ENCODE measurements at regions of chr10 and their contacts with region 1.

Region 1: GRCh38 chr10:112394475-112394875 is 20.6 kb downstream of the ACSL5 start:
- DNase-seq: peak; percentile 99
- ATAC-seq: peak; percentile 97
- H3K4me3 ChIP-seq: peak overlapping the region in 1 of 3 experiments; percentile 34; a peak in 1 of 6 replicates
- H3K27ac ChIP-seq: peak overlapping the region; percentile 83
- H3K4me1 ChIP-seq: peaks cover 71% of the 10 kb centered on the region
- H3K27me3 ChIP-seq: no peaks in the 10 kb centered on the region
- CTCF ChIP-seq: no peak
- EP300 ChIP-seq: peak; percentile 15 to 96; a peak in 2 of 4 replicates
- POLR2A ChIP-seq: 0 out of 4 replicates have a peak, but pooled peaks of 1 of the 2 experiments have one; percentile 39
- RAD21 ChIP-seq: peak; percentile 41; the same call in 1 of the 2 replicates

Region 2: DNA sequence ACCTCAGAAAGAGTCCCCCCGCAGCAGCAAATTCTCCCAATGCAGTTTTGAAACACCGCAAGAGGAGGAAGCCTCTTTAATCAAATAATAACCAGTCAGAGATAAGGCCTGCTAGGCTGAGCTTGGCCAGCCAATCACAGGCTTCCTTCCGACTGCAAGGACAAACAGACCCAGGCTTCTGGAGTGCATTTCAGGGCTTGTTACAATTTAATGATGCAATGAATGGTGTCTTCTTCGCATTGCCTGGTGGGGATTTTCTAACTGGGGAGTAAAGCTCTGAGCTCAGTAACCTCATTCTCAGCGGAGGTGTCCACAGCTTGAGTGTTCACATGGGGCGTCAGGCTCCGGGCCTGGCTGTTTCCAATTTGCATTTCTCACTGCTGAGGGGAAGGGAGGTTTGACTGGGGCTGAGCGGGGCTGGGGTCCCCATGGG is 179.1 kb before region 1 on chr10:
- CTCF ChIA-PET with region 1: no interaction called
- POLR2A ChIA-PET with region 1: no interaction called
- in situ Hi-C with region 1: no loop called
- intact Hi-C with region 1: no loop called
- DNase-seq: peak; percentile 72
- ATAC-seq: peak; percentile 83
- H3K4me3 ChIP-seq: no peak overlapping the region
- H3K27ac ChIP-seq: peak overlapping the region; percentile 51
- H3K4me1 ChIP-seq: peaks cover 88% of the 10 kb centered on the region
- H3K27me3 ChIP-seq: no peaks in the 10 kb centered on the region
- CTCF ChIP-seq: no peak
- EP300 ChIP-seq: no peak
- POLR2A ChIP-seq: no peak
- RAD21 ChIP-seq: no peak

Region 3: GRCh38 chr10:112278871-112279270 is 115.6 kb before region 1 on chr10:
- CTCF ChIA-PET with region 1: no interaction called
- POLR2A ChIA-PET with region 1: no interaction called
- in situ Hi-C with region 1: no loop called
- intact Hi-C with region 1: no loop called
- DNase-seq: no peak
- ATAC-seq: no peak
- H3K4me3 ChIP-seq: no peak overlapping the region
- H3K27ac ChIP-seq: peak overlapping the region; percentile 60
- H3K4me1 ChIP-seq: peaks cover 77% of the 10 kb centered on the region
- H3K27me3 ChIP-seq: no peaks in the 10 kb centered on the region
- CTCF ChIP-seq: no peak
- EP300 ChIP-seq: no peak
- POLR2A ChIP-seq: no peak
- RAD21 ChIP-seq: no peak

Region 4: GRCh38 chr10:112295853-112296830 is 98.3 kb before region 1 on chr10:
- CTCF ChIA-PET with region 1: no interaction called
- POLR2A ChIA-PET with region 1: no interaction called
- in situ Hi-C with region 1: no loop called
- intact Hi-C with region 1: no loop called
- DNase-seq: peak; percentile 76
- ATAC-seq: peak; percentile 77
- H3K4me3 ChIP-seq: peak overlapping the region; percentile 32 to 43 (median 41)
- H3K27ac ChIP-seq: peak overlapping the region; percentile 77
- H3K4me1 ChIP-seq: peaks cover 94% of the 10 kb centered on the region
- H3K27me3 ChIP-seq: no peaks in the 10 kb centered on the region
- CTCF ChIP-seq: no peak
- EP300 ChIP-seq: peak in 1 of 2 experiments; percentile 79; a peak in 2 of 4 replicates
- POLR2A ChIP-seq: peak in 1 of 2 experiments; percentile 15; a peak in 2 of 4 replicates
- RAD21 ChIP-seq: no peak

Region 5: DNA sequence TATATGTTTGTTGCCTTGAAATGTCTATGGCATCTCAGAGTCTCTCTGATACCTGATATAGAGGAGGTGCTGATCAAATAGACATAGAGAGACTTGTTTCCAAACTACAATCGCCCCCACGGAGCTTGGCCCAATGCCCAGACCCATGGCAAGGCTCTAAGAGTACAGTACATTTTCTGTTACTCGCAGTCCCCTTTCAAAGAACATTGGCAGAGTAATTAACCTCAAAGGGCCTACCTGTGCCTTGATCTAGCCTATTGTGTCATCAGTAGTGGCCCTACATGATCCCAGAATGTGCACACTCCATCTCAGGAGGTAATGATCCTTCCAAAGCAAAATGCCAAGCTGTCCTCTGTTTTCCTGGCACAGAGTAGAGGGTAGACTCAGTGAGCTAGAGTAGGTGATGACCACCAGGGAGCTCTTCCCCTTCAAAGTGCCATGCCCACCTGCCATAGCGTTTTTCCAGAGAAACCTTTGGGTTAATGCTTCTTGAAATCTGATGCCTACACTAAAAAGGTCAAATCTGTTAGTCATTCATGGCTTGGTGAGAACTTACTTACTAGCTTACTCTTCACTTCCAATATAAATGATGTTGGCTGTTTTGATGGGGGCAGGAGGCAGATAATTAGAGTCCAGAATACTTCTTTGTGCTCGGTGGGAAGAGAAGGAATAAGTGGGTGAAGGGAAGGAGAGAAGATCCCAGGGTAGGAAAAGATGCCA is 61.8 kb before region 1 on chr10:
- CTCF ChIA-PET with region 1: no interaction called
- POLR2A ChIA-PET with region 1: no interaction called
- in situ Hi-C with region 1: no loop called
- intact Hi-C with region 1: loop called (anchors 5 kb)
- DNase-seq: peak; percentile 80
- ATAC-seq: peak; percentile 60
- H3K4me3 ChIP-seq: 0 out of 6 replicates have a peak overlapping the region, but pooled peaks of 1 of the 3 experiments have one; percentile 29
- H3K27ac ChIP-seq: no peak overlapping the region
- H3K4me1 ChIP-seq: peaks cover 60% of the 10 kb centered on the region
- H3K27me3 ChIP-seq: no peaks in the 10 kb centered on the region
- CTCF ChIP-seq: no peak
- EP300 ChIP-seq: peak in 1 of 2 experiments; percentile 81; a peak in 1 of 4 replicates
- POLR2A ChIP-seq: no peak
- RAD21 ChIP-seq: no peak

Region 6: DNA sequence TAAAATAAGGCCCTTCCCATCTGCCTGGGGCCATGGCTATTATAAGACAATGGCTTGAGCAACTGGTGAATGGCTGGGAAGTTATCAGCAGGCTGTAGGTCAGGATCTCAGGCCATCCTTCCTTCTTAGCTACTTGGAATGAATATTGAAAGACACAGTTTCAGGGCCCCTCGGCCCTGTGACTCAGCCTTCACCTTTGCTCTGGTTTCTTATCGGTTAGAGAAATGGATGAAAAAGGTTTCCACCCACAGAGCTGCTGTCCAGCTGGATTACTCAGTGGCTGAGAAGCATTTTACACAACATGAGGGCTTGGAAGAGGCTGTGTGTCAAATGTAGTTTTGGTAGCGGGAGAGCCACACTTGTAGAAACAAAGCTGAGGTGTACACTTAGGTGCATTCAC is 11.2 kb before region 1 on chr10:
- CTCF ChIA-PET with region 1: no interaction called
- POLR2A ChIA-PET with region 1: interaction called, 72 read pairs
- in situ Hi-C with region 1: no loop called
- intact Hi-C with region 1: loop called (anchors 1 kb)
- DNase-seq: peak; percentile 72
- ATAC-seq: peak; percentile 56
- H3K4me3 ChIP-seq: no peak overlapping the region
- H3K27ac ChIP-seq: peak overlapping the region; percentile 65
- H3K4me1 ChIP-seq: peaks cover 100% of the 10 kb centered on the region
- H3K27me3 ChIP-seq: no peaks in the 10 kb centered on the region
- CTCF ChIP-seq: no peak
- EP300 ChIP-seq: peak in 1 of 2 experiments; percentile 72; a peak in 2 of 4 replicates
- POLR2A ChIP-seq: no peak
- RAD21 ChIP-seq: no peak